Activated CD4-positive, alpha-beta T cell treated with anti-CD3 and anti-CD28 coated beads, Interleukin-2, amount 10 ng/mL, durations not matched to agents 24 days and 14 days (primary cell): ENCODE measurements at regions of chr3 and their contacts with region 1.

Region 1: DNA sequence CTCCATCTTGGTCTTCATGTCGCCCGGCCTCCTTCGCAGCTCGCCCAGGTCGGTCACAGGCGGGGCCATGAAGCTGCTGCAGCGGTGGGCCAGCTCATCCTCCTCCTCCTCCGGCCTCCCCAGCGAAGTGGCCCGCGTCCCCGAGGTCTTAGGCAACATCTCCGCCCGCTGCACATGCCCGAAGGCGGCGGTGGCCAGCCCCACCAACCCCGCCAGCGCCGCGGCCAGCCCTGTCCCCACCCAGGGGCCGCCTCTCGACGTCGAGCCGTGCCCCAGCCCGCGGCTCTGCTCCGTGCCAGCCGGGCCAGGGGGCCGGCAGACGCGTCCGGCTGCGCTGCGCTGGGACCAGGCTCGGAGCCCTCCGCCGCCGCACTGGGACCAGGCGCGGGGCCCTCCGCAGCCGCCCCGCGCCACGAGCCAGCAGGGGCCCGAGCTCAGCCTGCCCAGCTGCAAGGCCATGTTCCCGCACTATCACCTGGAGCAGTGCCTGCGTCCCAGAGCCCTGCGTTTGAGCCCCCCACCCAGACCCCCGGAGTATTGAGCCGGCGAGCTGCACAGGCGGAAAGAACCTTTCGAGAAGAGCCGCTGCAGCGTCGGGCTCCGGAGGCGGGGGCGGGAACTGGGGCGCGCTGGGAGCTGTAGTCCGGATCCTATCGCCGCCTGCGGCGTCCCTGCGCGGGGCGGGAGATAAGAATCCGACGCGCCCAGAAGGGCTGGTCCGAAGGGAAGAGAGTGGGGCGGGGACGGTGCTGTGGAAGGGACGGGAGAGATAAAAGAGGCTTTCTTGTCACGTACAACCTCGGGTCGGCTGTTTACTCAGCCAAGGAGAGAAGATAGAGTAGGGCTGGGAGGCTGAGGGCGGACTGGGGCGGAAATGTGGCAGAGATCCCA is at the start of gene CPOX:
- DNase-seq: peak; percentile 97
- H3K4me3 Mint-ChIP-seq: peak within 1 kb of the TSS; percentile 90
- H3K27ac Mint-ChIP-seq: peak within 1 kb of the TSS; percentile 91
- H3K4me1 Mint-ChIP-seq: peaks cover 48% of the 10 kb centered on the region
- H3K27me3 Mint-ChIP-seq: no peaks in the 10 kb centered on the region
- total RNA-seq, gene CPOX: 46.4 and 46.6 TPM in 2 replicates

Region 2: DNA sequence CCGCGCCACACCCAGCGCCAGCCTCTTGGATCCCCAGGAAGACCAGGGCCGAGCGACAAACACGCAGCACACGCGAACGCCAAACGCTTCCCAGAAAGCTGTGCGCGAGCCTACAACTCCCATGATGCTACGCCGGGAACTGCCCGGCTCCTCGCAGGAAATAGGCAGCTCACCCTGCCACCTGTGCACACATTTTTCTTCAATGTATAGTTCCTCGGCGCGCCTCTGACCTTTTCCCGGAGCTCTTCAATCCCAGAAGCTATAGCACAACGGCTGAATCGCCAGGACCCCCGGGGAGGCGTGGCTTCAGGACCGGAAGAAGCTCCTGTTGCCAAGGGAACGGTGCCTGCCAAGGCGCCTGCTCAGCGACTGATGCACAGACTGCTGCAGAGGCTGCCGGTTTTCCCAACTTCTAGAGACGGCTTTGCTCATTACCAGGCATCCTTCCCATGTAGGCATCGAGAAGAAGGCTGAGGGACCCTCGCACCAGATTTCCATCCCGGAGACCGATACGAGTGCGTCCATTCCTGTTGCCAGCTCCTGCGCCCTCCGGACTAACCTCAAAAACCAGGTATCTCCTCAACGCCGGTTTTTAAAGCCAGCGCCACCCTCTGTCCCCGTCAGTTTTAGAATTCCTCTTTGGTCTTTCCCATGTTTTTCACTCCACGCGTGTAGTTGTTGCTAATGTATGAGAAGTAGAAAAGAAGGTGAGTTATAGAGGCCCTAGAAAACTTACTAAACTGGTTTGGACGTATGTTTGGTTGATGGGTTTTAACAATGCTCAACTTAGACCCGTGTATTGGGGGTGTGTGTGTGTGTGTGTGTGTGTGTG is 828.7 kb before region 1 on chr3 and contains the start of gene ARL6:
- intact Hi-C with region 1: loop called (anchors 1 kb)
- DNase-seq: peak; percentile 92
- H3K4me3 Mint-ChIP-seq: peak within 1 kb of the TSS; percentile 99
- H3K27ac Mint-ChIP-seq: peak within 1 kb of the TSS; percentile 97
- H3K4me1 Mint-ChIP-seq: peaks cover 21% of the 10 kb centered on the region
- H3K27me3 Mint-ChIP-seq: peaks cover 5% of the 10 kb centered on the region
- total RNA-seq, gene ARL6: 6.1 and 6.3 TPM in 2 replicates

Region 3: GRCh38 chr3:98564282-98565005 is 28.8 kb before region 1 on chr3:
- intact Hi-C with region 1: loop called (anchors 1 kb)
- DNase-seq: peak; percentile 76
- H3K4me3 Mint-ChIP-seq: peak overlapping the region; percentile 58
- H3K27ac Mint-ChIP-seq: peak overlapping the region; percentile 64
- H3K4me1 Mint-ChIP-seq: peaks cover 66% of the 10 kb centered on the region
- H3K27me3 Mint-ChIP-seq: no peaks in the 10 kb centered on the region

Region 4: DNA sequence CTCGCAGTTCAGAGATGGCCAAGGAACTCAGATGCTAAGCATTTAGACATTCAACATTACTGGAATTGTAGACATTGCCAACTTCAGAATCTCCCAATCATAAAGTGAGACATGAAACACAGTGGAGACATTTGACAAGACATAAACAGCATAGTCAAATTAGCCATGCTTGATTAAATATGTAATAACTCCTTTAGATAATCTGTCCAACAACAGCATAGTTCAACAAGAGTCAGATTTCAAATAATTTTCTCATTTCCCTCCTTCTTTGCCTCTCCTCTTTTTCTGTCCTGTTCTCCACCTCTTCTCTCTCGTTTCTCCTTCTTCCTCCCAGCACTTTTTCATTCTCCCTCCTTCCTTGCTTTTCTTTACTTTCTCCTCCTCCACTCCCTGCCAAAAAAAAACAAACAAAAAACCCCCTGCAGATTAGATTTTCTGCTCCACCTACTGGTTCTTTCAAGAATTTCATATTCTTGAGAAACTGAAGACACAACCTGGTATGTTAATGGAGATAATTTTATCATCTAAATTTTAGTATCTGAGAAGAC is 20.0 kb before region 1 on chr3:
- intact Hi-C with region 1: loop called (anchors 1 kb)
- DNase-seq: peak; percentile 65
- H3K4me3 Mint-ChIP-seq: peak overlapping the region; percentile 59
- H3K27ac Mint-ChIP-seq: peak overlapping the region; percentile 75
- H3K4me1 Mint-ChIP-seq: peaks cover 49% of the 10 kb centered on the region
- H3K27me3 Mint-ChIP-seq: no peaks in the 10 kb centered on the region

Region 5: DNA sequence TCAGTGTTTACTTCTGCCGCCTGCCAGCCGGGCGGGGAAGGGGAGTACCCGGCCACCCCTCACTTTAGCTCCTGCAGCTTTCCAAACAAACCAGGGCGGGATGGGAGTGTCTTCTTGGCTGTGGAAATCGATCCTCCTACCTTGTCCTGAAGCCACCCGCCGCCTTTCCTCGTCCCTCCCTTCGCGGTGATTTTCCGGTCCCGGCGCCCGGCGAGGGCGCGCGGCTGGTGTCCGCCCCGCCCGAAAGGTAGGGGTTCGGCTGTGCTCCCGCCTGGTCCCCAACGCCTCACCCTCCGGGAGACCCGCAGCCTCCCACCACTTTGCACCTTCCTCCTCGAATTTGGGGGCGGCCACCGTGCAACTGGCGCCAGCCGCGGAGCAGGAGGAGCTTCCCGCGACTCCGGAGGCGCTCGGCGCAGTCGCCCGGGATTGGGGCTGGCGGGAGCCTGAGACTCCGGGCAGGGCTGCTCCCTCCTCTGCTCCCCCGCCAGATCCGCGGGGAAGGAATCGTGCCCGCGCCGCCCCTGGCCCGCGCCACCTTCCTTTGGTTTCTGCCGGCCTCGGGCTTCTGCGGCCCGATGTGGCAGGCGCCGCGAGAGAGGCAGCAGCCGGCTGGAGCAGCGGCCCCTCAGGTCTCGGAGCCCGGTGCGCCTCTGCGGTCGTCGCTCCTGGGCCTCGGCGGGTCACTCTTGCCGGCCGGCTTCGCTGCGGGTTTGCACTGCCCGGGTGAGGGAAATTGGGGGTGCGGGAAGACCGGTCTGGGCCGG is 139.2 kb after region 1 on chr3:
- intact Hi-C with region 1: loop called (anchors 5 kb)
- DNase-seq: peak; percentile 67
- H3K4me3 Mint-ChIP-seq: peak overlapping the region; percentile 81
- H3K27ac Mint-ChIP-seq: no peak overlapping the region
- H3K4me1 Mint-ChIP-seq: peaks cover 15% of the 10 kb centered on the region
- H3K27me3 Mint-ChIP-seq: peaks cover 72% of the 10 kb centered on the region

Region 6: GRCh38 chr3:98901392-98902350 is 308.4 kb after region 1 on chr3 and contains the start of gene DCBLD2:
- intact Hi-C with region 1: loop called (anchors 1 kb)
- DNase-seq: peak; percentile 99
- H3K4me3 Mint-ChIP-seq: peak within 1 kb of the TSS; percentile 89
- H3K27ac Mint-ChIP-seq: peak within 1 kb of the TSS; percentile 77
- H3K4me1 Mint-ChIP-seq: peaks cover 14% of the 10 kb centered on the region
- H3K27me3 Mint-ChIP-seq: peaks cover 29% of the 10 kb centered on the region
- total RNA-seq, gene DCBLD2: 2.7 and 3.8 TPM in 2 replicates